ENCODE measurements at regions of chr3 and their contacts with region 1.

Region 1: GRCh38 chr3:171772427-171773056 is 37.7 kb downstream of the PLD1 start:
- DNase-seq: no peak
- ATAC-seq: peak; percentile 62
- H3K4me3 ChIP-seq: no peak overlapping the region
- H3K27ac ChIP-seq: no peak overlapping the region
- H3K4me1 ChIP-seq: no peaks in the 10 kb centered on the region
- H3K27me3 ChIP-seq: no peaks in the 10 kb centered on the region
- CTCF ChIP-seq: peak; percentile 63 to 79 (median 70)
- EP300 ChIP-seq: no peak
- POLR2A ChIP-seq: no peak
- RAD21 ChIP-seq: peak; percentile 80

Region 2: GRCh38 chr3:171606151-171606751 is 166.3 kb before region 1 on chr3:
- CTCF ChIA-PET with region 1: interaction called, 12 read pairs
- POLR2A ChIA-PET with region 1: no interaction called
- RAD21 ChIA-PET with region 1: interaction called, 6 read pairs
- SMC1A ChIA-PET with region 1: interaction called, 59 read pairs
- in situ Hi-C with region 1: no loop called
- intact Hi-C with region 1: no loop called
- DNase-seq: no peak
- ATAC-seq: no peak
- H3K4me3 ChIP-seq: no peak overlapping the region
- H3K27ac ChIP-seq: no peak overlapping the region
- H3K4me1 ChIP-seq: no peaks in the 10 kb centered on the region
- H3K27me3 ChIP-seq: no peaks in the 10 kb centered on the region; a peak in 1 of 4 replicates
- CTCF ChIP-seq: no peak
- EP300 ChIP-seq: no peak
- POLR2A ChIP-seq: no peak
- RAD21 ChIP-seq: no peak

Region 3: GRCh38 chr3:171654809-171655208 is 117.7 kb before region 1 on chr3:
- CTCF ChIA-PET with region 1: interaction called, 26 read pairs
- POLR2A ChIA-PET with region 1: no interaction called
- RAD21 ChIA-PET with region 1: interaction called, 20 read pairs
- SMC1A ChIA-PET with region 1: interaction called, 42 read pairs
- in situ Hi-C with region 1: no loop called
- intact Hi-C with region 1: no loop called
- DNase-seq: no peak
- ATAC-seq: peak; percentile 31
- H3K4me3 ChIP-seq: no peak overlapping the region
- H3K27ac ChIP-seq: peak overlapping the region; percentile 32; the same call in 1 of the 2 replicates
- H3K4me1 ChIP-seq: peaks cover 7% of the 10 kb centered on the region
- H3K27me3 ChIP-seq: no peaks in the 10 kb centered on the region
- CTCF ChIP-seq: no peak
- EP300 ChIP-seq: no peak
- POLR2A ChIP-seq: no peak
- RAD21 ChIP-seq: no peak

Region 4: DNA sequence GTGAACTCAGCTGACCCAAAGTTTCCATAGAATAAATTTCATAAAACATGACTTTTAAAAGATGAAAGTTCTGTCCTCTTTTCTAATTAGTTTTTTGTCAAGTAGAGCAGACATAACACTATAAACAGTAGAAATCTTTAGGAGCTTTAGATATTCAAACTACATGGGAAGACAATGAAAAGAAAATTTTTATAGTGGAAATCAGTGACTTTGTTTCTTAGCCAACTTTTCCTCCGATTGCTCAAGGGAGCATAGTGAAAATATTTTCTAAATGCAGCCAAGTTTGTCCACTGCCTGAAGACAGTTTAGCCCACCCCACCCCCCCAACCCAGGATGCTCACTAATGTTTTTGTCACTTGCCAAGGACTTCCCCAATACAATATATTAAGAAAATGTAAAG is 77.1 kb before region 1 on chr3:
- CTCF ChIA-PET with region 1: interaction called, 37 read pairs
- POLR2A ChIA-PET with region 1: interaction called, 7 read pairs
- RAD21 ChIA-PET with region 1: interaction called, 33 read pairs
- SMC1A ChIA-PET with region 1: interaction called, 46 read pairs
- in situ Hi-C with region 1: no loop called
- intact Hi-C with region 1: loop called (anchors 5 kb)
- DNase-seq: no peak
- ATAC-seq: no peak
- H3K4me3 ChIP-seq: no peak overlapping the region
- H3K27ac ChIP-seq: no peak overlapping the region
- H3K4me1 ChIP-seq: peaks cover 3% of the 10 kb centered on the region; the same call in 1 of the 2 replicates
- H3K27me3 ChIP-seq: no peaks in the 10 kb centered on the region; a peak in 1 of 4 replicates
- CTCF ChIP-seq: no peak
- EP300 ChIP-seq: no peak
- POLR2A ChIP-seq: no peak
- RAD21 ChIP-seq: no peak

Region 5: DNA sequence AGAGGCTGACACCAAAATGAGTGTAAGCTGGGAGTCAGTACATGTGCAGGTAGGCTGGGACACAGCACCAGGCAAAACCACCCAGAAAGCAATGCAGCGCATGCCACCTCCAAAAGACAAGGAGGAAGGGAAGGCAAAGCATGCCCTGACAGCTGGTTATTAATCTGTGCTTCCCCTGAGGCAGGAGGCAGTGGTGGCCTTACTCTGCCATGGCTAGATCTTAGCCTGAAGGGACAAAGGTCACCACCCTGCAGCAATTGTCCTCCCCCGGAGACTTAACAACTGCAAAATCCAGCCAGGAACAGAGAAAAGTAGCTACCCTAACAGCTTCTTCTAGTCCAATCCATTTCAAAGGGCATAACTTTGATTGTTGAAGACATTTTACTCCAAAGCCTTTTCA is 36.0 kb before region 1 on chr3:
- CTCF ChIA-PET with region 1: interaction called, 39 read pairs
- POLR2A ChIA-PET with region 1: no interaction called
- RAD21 ChIA-PET with region 1: interaction called, 11 read pairs
- SMC1A ChIA-PET with region 1: interaction called, 83 read pairs
- in situ Hi-C with region 1: no loop called
- intact Hi-C with region 1: no loop called
- DNase-seq: no peak
- ATAC-seq: no peak
- H3K4me3 ChIP-seq: no peak overlapping the region
- H3K27ac ChIP-seq: no peak overlapping the region
- H3K4me1 ChIP-seq: no peaks in the 10 kb centered on the region
- H3K27me3 ChIP-seq: no peaks in the 10 kb centered on the region
- CTCF ChIP-seq: no peak
- EP300 ChIP-seq: no peak
- POLR2A ChIP-seq: no peak
- RAD21 ChIP-seq: no peak

Region 6: DNA sequence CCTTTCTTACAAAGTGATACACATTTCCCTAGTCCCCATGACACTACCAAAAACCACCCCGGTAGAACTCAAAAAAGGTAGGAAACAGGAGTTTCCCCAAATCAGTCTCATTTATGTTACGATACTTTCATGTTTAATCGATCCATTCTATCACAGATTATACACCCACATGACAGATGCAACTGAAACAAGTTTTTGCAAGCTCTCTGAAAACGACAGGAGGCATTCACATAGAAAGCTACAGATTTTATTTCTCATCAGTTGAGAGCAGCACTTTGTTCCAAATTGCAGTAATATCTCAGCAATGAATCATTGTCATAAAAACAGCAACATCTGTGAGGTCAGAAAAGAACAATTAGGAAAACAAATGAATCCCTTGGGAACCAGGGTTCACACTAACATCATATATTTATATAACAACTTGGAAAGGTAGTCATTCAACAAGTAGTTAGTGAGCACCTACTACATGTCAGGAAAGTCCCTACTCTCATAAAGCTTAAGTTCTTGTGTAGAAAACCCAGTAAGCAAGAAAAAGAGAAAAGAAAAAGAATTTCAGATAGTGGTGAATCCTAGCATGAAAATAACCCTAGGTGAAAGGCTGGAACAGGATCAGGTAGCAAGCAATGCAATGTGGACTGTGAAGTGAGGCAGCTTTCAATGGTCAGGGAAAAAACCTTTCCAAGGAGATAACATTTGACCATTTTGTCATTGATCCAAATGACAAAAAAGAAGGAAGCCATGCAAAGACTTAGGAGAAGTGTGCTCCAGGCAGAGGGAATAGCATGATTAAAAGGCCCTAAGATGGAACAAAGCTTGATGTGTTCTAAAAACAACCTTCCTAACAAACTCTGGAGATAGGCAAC is 29.4 kb after region 1 on chr3:
- CTCF ChIA-PET with region 1: interaction called, 34 read pairs
- POLR2A ChIA-PET with region 1: interaction called, 22 read pairs
- RAD21 ChIA-PET with region 1: interaction called, 80 read pairs
- SMC1A ChIA-PET with region 1: interaction called, 64 read pairs
- in situ Hi-C with region 1: no loop called
- intact Hi-C with region 1: no loop called
- DNase-seq: peak; percentile 70
- ATAC-seq: peak; percentile 25
- H3K4me3 ChIP-seq: no peak overlapping the region
- H3K27ac ChIP-seq: peak overlapping the region; percentile 77
- H3K4me1 ChIP-seq: peaks cover 8% of the 10 kb centered on the region; the same call in 1 of the 2 replicates
- H3K27me3 ChIP-seq: no peaks in the 10 kb centered on the region
- CTCF ChIP-seq: no peak
- EP300 ChIP-seq: peak; percentile 59 to 78; a peak in 2 of 4 replicates
- POLR2A ChIP-seq: no peak
- RAD21 ChIP-seq: no peak

Region 7: DNA sequence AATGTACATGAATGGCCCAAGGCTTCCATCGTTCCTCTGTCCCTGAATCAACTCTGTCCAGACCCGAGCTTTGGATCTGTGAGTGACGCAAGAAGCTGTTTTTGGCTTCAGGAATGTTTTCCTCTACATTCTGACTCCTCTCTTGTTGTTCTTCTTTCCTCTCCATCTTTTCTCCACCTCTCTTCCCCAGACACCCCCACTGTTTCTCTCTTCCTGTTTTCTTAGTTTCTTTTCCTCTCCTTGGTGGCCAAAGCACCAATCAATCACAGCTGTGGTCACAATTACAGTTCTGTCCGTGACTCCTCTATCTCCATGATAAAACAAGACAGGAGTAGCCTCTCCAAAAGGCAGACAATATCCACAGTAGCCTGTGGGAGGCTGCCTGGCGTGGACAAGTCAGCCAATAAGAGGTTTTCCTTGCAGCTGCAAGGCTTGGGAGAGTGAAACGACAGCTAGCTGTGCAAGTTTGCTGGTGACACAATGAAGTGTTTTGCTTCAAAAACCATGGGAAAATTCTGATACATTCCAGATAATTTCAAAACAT is 65.7 kb after region 1 on chr3:
- CTCF ChIA-PET with region 1: interaction called, 274 read pairs
- POLR2A ChIA-PET with region 1: no interaction called
- RAD21 ChIA-PET with region 1: interaction called, 333 read pairs
- SMC1A ChIA-PET with region 1: interaction called, 67 read pairs
- in situ Hi-C with region 1: no loop called
- intact Hi-C with region 1: loop called (anchors 1 kb)
- DNase-seq: no peak
- ATAC-seq: peak; percentile 49
- H3K4me3 ChIP-seq: no peak overlapping the region
- H3K27ac ChIP-seq: no peak overlapping the region
- H3K4me1 ChIP-seq: 0 out of 2 replicates have a peak, but pooled peaks cover 3% of the 10 kb centered on the region
- H3K27me3 ChIP-seq: no peaks in the 10 kb centered on the region; a peak in 1 of 4 replicates
- CTCF ChIP-seq: no peak
- EP300 ChIP-seq: peak in 1 of 2 experiments; percentile 65; a peak in 1 of 4 replicates
- POLR2A ChIP-seq: no peak
- RAD21 ChIP-seq: no peak

Region 8: GRCh38 chr3:172046268-172046915 is 273.9 kb after region 1 on chr3:
- CTCF ChIA-PET with region 1: no interaction called
- POLR2A ChIA-PET with region 1: no interaction called
- RAD21 ChIA-PET with region 1: no interaction called
- SMC1A ChIA-PET with region 1: no interaction called
- in situ Hi-C with region 1: no loop called
- intact Hi-C with region 1: no loop called
- DNase-seq: no peak
- ATAC-seq: peak; percentile 64
- H3K4me3 ChIP-seq: no peak overlapping the region; the same call in 1 of the 2 replicates
- H3K27ac ChIP-seq: peak overlapping the region; percentile 18; the same call in 1 of the 2 replicates
- H3K4me1 ChIP-seq: no peaks in the 10 kb centered on the region
- H3K27me3 ChIP-seq: no peaks in the 10 kb centered on the region
- CTCF ChIP-seq: no peak
- EP300 ChIP-seq: no peak
- POLR2A ChIP-seq: no peak
- RAD21 ChIP-seq: no peak